Naive thymus-derived CD4-positive, alpha-beta T cell (primary cell): ENCODE measurements at regions of chr6 and their contacts with region 1.

Region 1: DNA sequence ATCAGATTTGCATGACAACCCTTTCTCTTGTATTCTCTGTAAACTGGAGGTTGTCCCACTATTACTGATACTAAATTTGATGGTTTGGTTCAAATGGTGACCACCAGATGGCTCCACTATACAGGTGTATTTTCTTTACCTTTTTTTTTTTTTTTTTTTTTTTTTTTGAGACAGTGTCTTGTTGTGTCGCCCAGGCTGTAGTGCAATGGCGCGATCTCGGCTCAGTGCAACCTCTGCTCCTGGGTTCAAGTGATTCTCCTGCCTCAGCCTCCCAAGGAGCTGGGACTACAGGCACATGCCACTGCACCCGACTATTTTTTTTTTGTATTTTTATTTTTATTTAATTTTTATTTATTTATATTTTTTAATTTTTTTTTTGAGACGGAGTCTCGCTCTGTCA is 6.6 kb upstream of the WTAP start:
- DNase-seq: peak in 7 of 9 donors; percentile 54 to 73 (median 65)
- ATAC-seq: peak; percentile 85
- H3K4me3 ChIP-seq: no peak overlapping the region
- H3K4me3 Mint-ChIP-seq: no peak overlapping the region
- H3K27ac ChIP-seq: no peak overlapping the region
- H3K27ac Mint-ChIP-seq: peak overlapping the region in 1 of 9 donors; percentile 32
- H3K4me1 ChIP-seq: peaks cover under 1 to 4% of the 10 kb centered on the region in 2 donors
- H3K4me1 Mint-ChIP-seq: peaks cover 12 to 33% (median 25%) of the 10 kb centered on the region in 7 donors
- H3K27me3 ChIP-seq: no peaks in the 10 kb centered on the region
- H3K27me3 Mint-ChIP-seq: no peaks in the 10 kb centered on the region

Region 2: DNA sequence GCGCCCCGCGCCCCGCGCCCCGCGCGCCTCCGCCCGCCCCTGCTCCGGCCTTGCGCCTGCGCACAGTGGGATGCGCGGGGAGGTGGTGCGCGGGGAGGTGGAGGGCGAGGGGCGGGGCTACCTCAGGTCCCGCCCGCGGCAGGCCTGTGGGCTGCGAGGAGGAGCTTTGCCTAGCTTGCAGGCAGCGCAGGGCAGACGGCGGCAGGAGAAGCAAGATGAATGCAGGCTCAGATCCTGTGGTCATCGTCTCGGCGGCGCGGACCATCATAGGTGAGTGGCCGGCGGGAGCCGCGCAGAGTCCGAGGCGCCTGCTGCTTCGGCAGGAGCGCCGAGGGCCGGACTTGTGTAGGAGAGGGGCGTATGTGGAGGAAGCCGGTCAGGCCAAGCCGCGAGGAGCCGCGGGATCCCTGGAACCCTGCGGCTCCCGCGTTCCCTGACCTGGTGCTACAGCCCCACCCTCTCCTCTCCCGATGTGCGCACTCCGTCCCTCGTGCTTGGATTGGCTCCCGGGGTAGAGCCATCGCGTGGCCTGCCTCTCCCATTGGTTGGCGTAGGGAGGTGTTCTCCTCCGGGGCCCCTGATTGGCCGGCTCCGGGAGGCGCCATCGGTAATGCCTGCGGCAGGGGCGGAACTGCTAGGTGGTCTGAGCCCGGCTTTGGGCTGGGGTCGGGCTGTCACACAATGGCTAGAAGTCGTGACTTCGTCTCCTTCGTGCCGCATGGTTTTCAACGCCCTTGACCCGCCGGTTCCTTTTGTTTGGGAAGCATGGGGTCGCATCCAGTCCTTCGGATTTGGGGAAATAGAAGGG is 41.4 kb after region 1 on chr6 and contains the start of gene ACAT2:
- CTCF ChIA-PET with region 1: interaction called, 7 read pairs
- POLR2A ChIA-PET with region 1: interaction called, 63 read pairs
- intact Hi-C with region 1: no loop called
- DNase-seq: peak; percentile 89 to 95 (median 93)
- ATAC-seq: peak; percentile 94
- H3K4me3 ChIP-seq: peak within 1 kb of the TSS; percentile 99
- H3K4me3 Mint-ChIP-seq: peak within 1 kb of the TSS; percentile 84 to 97 (median 94)
- H3K27ac ChIP-seq: peak within 1 kb of the TSS; percentile 98
- H3K27ac Mint-ChIP-seq: peak within 1 kb of the TSS; percentile 93 to 99 (median 97)
- H3K4me1 ChIP-seq: peaks cover 6 to 15% of the 10 kb centered on the region in 2 donors
- H3K4me1 Mint-ChIP-seq: peaks cover 23 to 49% (median 34%) of the 10 kb centered on the region in 7 donors
- H3K27me3 ChIP-seq: no peaks in the 10 kb centered on the region
- H3K27me3 Mint-ChIP-seq: no peaks in the 10 kb centered on the region
- total RNA-seq, gene ACAT2: 18.5 to 53.9 (median 28.0) TPM

Region 3: DNA sequence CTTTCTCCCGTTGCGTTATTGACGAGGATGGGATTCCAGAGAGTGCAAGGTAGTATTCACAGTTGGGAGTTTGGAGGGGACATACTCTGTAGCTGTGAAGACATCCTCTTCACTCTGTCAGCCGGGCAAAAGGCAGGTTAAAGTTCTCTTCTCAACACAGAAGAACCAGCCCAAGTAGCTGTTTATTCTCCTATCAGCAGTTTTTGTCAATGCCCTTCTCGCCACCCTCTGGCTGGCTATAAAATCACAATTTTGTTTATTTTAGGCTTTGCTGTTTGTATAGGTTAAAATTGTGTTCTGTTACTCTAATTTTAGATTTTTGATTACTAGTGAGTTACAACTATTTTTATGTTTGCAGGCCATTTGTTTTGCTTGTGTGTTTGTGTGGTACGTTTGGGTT is 132.2 kb after region 1 on chr6:
- CTCF ChIA-PET with region 1: interaction called, 7 read pairs
- POLR2A ChIA-PET with region 1: interaction called, 3 read pairs
- intact Hi-C with region 1: loop called (anchors 1 kb)
- DNase-seq: peak in 6 of 9 donors; percentile 12 to 59 (median 41)
- ATAC-seq: peak; percentile 37
- H3K4me3 ChIP-seq: no peak overlapping the region
- H3K4me3 Mint-ChIP-seq: no peak overlapping the region
- H3K27ac ChIP-seq: no peak overlapping the region
- H3K27ac Mint-ChIP-seq: peak overlapping the region in 1 of 9 donors; percentile 38
- H3K4me1 ChIP-seq: no peaks in the 10 kb centered on the region
- H3K4me1 Mint-ChIP-seq: peaks cover 0 to 6% (median 0%) of the 10 kb centered on the region in 7 donors
- H3K27me3 ChIP-seq: no peaks in the 10 kb centered on the region
- H3K27me3 Mint-ChIP-seq: peaks cover 0 to 37% (median 0%) of the 10 kb centered on the region in 5 donors

Region 4: DNA sequence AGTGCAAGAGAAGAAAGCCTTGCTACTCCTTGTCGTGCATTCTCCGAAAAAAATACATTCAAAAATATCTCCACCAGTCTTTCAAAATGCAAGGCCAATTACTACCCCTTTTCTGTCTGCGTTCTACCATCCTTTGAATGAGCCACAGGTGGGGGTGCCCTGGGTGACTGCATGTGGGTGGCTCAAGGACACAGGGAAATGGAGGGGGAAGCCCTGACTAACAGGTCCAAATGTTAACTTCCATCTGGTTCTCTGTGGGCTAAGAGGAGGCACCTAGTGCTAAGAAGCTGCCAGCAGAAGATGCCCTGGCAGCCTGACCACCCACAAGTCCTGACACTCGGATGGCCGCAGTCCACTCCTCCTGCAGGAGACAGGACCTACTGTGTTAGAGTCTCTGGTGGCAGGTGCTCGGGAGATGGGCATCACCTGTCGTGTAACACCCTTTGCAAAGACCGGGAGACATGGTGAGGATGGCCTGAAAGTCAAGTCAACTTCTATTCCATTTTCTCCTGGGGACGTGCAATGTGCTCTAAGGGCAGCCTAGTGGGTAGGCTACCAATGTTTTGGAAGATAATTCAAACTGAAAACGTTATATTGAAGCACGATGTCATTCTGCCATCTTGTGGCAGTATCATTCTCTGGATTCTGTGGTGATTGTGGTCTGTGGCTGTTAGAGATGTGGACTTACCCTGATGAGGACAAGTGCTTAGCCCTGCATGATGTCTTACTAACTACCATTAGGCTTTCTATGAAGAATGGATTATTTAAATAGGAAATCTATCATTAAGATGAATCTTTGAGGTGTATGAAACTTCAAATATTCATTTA is 220.8 kb after region 1 on chr6:
- CTCF ChIA-PET with region 1: interaction called, 5 read pairs
- POLR2A ChIA-PET with region 1: no interaction called
- intact Hi-C with region 1: loop called (anchors 1 kb)
- DNase-seq: peak in 7 of 9 donors; percentile 23 to 55 (median 40)
- ATAC-seq: peak; percentile 85
- H3K4me3 ChIP-seq: no peak overlapping the region
- H3K4me3 Mint-ChIP-seq: no peak overlapping the region
- H3K27ac ChIP-seq: no peak overlapping the region
- H3K27ac Mint-ChIP-seq: no peak overlapping the region
- H3K4me1 ChIP-seq: no peaks in the 10 kb centered on the region
- H3K4me1 Mint-ChIP-seq: peaks cover 0 to 7% (median 0%) of the 10 kb centered on the region in 7 donors
- H3K27me3 ChIP-seq: no peaks in the 10 kb centered on the region
- H3K27me3 Mint-ChIP-seq: peaks cover 0 to 28% (median 3%) of the 10 kb centered on the region in 5 donors